Endothelial cell of umbilical vein (primary cell): ENCODE measurements at regions of chr1 and their contacts with region 1.

Region 1: GRCh38 chr1:202852163-202852904 is 36.6 kb downstream of the RABIF start:
- DNase-seq: peak; percentile 70
- H3K4me3 ChIP-seq: no peak overlapping the region
- H3K27ac ChIP-seq: no peak overlapping the region
- H3K4me1 ChIP-seq: no peaks in the 10 kb centered on the region
- H3K27me3 ChIP-seq: no peaks in the 10 kb centered on the region
- CTCF ChIP-seq: peak; percentile 60 to 76
- POLR2A ChIP-seq: no peak

Region 2: DNA sequence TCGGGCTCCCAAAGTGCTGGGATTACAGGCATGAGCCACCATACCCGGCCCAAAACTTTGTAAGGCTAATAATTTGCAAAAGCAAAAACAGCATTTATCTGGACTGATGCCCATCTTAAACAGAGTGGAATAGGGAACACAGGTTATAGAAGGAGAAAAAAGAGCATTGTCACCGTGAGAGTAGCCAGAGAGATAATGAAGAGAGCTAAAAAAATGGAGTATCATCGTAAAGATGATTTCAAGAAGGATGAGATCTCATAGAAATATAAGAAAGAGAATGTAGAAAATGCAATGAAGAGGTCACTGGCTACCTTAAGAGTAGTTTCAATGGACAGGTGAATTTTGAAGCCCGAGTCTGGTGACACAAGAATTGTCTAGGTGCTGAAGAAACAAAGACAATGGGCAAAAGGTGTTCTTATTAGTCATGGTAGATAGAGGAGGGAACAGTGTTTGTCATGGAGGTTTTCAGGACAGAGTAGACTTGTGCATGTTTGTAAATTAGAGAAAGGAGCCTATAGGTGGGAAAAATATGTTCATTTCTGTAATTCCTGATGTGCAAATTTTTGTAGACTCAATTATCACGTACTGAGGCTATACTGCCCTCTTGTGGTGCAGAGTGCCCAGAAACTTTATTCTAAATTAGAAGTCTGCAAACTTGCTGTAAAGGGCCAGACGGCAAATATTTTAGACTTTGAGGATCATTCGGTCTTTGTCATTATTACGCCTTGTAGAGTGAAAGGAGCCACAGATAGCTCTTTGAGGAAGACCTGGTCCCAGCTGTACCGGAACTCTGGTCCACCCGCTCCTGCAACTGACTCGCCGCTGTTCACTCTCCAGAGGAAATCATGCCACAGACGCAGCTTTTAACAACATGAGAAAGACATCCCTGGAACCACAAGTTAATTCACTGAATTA is 146.8 kb after region 1 on chr1:
- CTCF ChIA-PET with region 1: no interaction called
- POLR2A ChIA-PET with region 1: no interaction called
- dilution Hi-C with region 1: no loop called
- intact Hi-C with region 1: loop called (anchors 1 kb)
- DNase-seq: peak; percentile 69
- H3K4me3 ChIP-seq: no peak overlapping the region
- H3K27ac ChIP-seq: no peak overlapping the region
- H3K4me1 ChIP-seq: peaks cover 5% of the 10 kb centered on the region
- H3K27me3 ChIP-seq: peaks cover 16 to 27% of the 10 kb centered on the region in 2 experiments
- CTCF ChIP-seq: peak; percentile 66 to 72
- POLR2A ChIP-seq: no peak